CD8-positive, alpha-beta T cell (primary cell): ENCODE measurements at regions of chr15 and their contacts with region 1.

Region 1: DNA sequence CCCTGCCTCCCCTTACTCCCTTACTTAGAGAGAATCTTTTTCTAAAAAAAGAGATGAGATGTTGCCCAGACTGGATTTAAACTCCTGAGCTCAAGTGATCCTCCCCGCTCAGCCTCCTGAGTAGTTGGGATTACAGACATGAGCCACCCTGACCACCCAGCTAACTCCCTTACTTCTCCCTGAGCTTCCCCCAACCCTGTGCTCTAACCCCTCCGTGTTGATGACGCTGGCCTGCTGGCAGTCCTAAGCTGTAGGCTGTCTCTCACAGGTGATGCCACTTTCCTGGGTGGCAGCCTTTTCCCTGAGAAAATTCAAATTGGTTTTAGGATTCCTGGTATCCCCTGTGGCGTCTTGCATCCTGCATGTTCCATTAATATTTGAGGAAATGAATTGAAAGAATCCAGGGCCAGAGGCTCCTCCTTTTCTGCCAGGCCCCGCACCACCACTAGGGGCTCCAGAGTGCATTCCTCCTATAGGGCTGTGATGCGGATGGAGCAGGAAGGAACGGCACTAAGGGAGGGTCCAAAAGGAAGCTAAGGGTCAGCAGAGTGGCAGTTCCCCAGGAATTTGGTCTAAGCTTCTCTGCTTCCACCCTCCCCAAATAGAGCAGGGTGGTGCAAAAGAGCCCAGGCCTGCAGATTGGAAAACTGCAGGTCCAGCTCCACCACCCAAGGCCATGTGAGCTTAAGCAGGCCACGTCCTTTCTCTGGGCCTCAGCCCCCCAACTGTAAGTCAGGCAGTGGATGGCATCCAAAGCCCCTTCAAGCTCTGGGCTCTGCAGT is 101.1 kb downstream of the DAPK2 start:
- DNase-seq: peak; percentile 36 to 79 (median 68)
- ATAC-seq: peak; percentile 98
- H3K4me3 ChIP-seq: no peak overlapping the region
- H3K4me3 Mint-ChIP-seq: no peak overlapping the region
- H3K27ac ChIP-seq: no peak overlapping the region
- H3K27ac Mint-ChIP-seq: peak overlapping the region; percentile 42
- H3K4me1 ChIP-seq: peaks cover 7% of the 10 kb centered on the region
- H3K4me1 Mint-ChIP-seq: peaks cover 18% of the 10 kb centered on the region
- H3K27me3 ChIP-seq: no peaks in the 10 kb centered on the region
- H3K27me3 Mint-ChIP-seq: no peaks in the 10 kb centered on the region
- CTCF ChIP-seq: peak; percentile 89

Region 2: DNA sequence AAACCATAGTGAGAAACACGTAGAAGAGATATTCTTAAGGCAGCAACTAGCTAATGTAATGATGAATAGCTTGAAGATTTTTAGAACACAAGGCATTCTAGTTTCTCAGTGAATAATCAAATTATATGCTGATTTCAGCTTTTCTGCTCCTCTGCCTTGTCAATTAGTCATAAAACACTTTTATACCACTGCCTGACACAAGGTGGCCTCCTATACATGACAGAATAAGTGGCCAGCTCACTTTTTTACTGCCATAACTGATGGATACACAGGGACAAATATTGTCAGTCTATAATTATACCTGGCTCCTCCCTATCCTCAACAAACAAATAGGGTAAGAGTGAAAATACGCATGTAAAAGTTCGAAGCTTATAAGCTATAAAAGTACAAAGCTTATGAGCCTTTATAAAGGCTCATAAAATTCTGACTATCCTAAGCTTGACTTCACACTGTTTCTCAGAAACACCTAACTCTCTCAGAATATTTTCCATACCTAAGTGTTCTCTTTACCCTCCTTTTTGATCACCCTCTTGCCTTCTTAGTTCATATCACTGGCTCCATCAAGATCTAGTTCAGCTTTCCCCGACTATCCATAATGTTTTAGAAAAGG is 193.0 kb before region 1 on chr15:
- CTCF ChIA-PET with region 1: interaction called, 17 read pairs
- POLR2A ChIA-PET with region 1: no interaction called
- intact Hi-C with region 1: no loop called
- DNase-seq: peak in 7 of 9 experiments; percentile 18 to 75 (median 28)
- ATAC-seq: peak; percentile 86
- H3K4me3 ChIP-seq: no peak overlapping the region
- H3K4me3 Mint-ChIP-seq: no peak overlapping the region
- H3K27ac ChIP-seq: no peak overlapping the region
- H3K27ac Mint-ChIP-seq: peak overlapping the region; percentile 78
- H3K4me1 ChIP-seq: no peaks in the 10 kb centered on the region
- H3K4me1 Mint-ChIP-seq: peaks cover 6% of the 10 kb centered on the region
- H3K27me3 ChIP-seq: no peaks in the 10 kb centered on the region
- H3K27me3 Mint-ChIP-seq: no peaks in the 10 kb centered on the region
- CTCF ChIP-seq: peak; percentile 85

Region 3: GRCh38 chr15:63922261-63922904 is 22.8 kb before region 1 on chr15:
- CTCF ChIA-PET with region 1: interaction called, 15 read pairs
- POLR2A ChIA-PET with region 1: no interaction called
- intact Hi-C with region 1: no loop called
- DNase-seq: no peak
- ATAC-seq: no peak
- H3K4me3 ChIP-seq: no peak overlapping the region
- H3K4me3 Mint-ChIP-seq: no peak overlapping the region
- H3K27ac ChIP-seq: no peak overlapping the region
- H3K27ac Mint-ChIP-seq: no peak overlapping the region
- H3K4me1 ChIP-seq: peaks cover 10% of the 10 kb centered on the region
- H3K4me1 Mint-ChIP-seq: peaks cover 19% of the 10 kb centered on the region
- H3K27me3 ChIP-seq: no peaks in the 10 kb centered on the region
- H3K27me3 Mint-ChIP-seq: no peaks in the 10 kb centered on the region
- CTCF ChIP-seq: no peak

Region 4: GRCh38 chr15:63969652-63970421 is 24.6 kb after region 1 on chr15:
- CTCF ChIA-PET with region 1: interaction called, 15 read pairs
- POLR2A ChIA-PET with region 1: no interaction called
- intact Hi-C with region 1: no loop called
- DNase-seq: no peak
- ATAC-seq: no peak
- H3K4me3 ChIP-seq: no peak overlapping the region
- H3K4me3 Mint-ChIP-seq: no peak overlapping the region
- H3K27ac ChIP-seq: peak overlapping the region in 1 of 2 experiments; percentile 74
- H3K27ac Mint-ChIP-seq: peak overlapping the region; percentile 96
- H3K4me1 ChIP-seq: peaks cover 35% of the 10 kb centered on the region
- H3K4me1 Mint-ChIP-seq: peaks cover 36% of the 10 kb centered on the region
- H3K27me3 ChIP-seq: no peaks in the 10 kb centered on the region
- H3K27me3 Mint-ChIP-seq: no peaks in the 10 kb centered on the region
- CTCF ChIP-seq: no peak

Region 5: DNA sequence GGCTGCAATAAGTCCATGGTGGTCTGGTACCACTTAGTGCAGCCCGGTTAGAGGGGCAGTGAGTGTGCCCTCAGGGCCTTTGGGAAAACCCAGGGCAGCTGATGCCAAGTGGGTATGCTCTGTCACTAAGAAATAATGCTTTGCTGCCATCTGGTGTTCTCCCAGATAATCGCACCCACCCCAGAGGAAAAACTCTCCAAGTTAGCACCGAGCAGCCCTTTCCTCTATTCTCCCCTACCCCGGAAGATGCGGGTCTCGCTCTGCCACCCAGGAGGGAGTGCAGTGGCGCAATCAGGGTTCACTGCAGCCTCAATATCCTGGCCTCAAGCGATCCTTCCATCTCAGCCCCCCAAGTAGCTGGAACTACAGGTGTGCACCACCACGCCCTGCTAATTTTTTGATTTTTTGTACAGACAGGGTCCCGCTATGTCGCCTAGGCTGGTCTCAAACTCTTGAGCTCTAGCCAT is 122.4 kb after region 1 on chr15:
- CTCF ChIA-PET with region 1: interaction called, 13 read pairs
- POLR2A ChIA-PET with region 1: no interaction called
- intact Hi-C with region 1: loop called in 1 of 2 experiments (anchors 5 kb)
- DNase-seq: peak; percentile 49 to 83 (median 71)
- ATAC-seq: peak; percentile 91
- H3K4me3 ChIP-seq: no peak overlapping the region
- H3K4me3 Mint-ChIP-seq: no peak overlapping the region
- H3K27ac ChIP-seq: no peak overlapping the region
- H3K27ac Mint-ChIP-seq: no peak overlapping the region
- H3K4me1 ChIP-seq: no peaks in the 10 kb centered on the region
- H3K4me1 Mint-ChIP-seq: peaks cover 5% of the 10 kb centered on the region
- H3K27me3 ChIP-seq: no peaks in the 10 kb centered on the region
- H3K27me3 Mint-ChIP-seq: no peaks in the 10 kb centered on the region
- CTCF ChIP-seq: peak; percentile 81

Region 6: GRCh38 chr15:64856429-64857145 is 911.4 kb after region 1 on chr15:
- CTCF ChIA-PET with region 1: no interaction called
- POLR2A ChIA-PET with region 1: no interaction called
- intact Hi-C with region 1: no loop called
- DNase-seq: no peak
- ATAC-seq: no peak
- H3K4me3 ChIP-seq: no peak overlapping the region
- H3K4me3 Mint-ChIP-seq: no peak overlapping the region
- H3K27ac ChIP-seq: peak overlapping the region in 1 of 2 experiments; percentile 31
- H3K27ac Mint-ChIP-seq: peak overlapping the region; percentile 42
- H3K4me1 ChIP-seq: peaks cover 31% of the 10 kb centered on the region
- H3K4me1 Mint-ChIP-seq: peaks cover 49% of the 10 kb centered on the region
- H3K27me3 ChIP-seq: no peaks in the 10 kb centered on the region
- H3K27me3 Mint-ChIP-seq: no peaks in the 10 kb centered on the region
- CTCF ChIP-seq: no peak